Esophagus muscularis mucosa (tissue), 4 donors: ENCODE measurements at regions of chr10 and their contacts with region 1.

Region 1: DNA sequence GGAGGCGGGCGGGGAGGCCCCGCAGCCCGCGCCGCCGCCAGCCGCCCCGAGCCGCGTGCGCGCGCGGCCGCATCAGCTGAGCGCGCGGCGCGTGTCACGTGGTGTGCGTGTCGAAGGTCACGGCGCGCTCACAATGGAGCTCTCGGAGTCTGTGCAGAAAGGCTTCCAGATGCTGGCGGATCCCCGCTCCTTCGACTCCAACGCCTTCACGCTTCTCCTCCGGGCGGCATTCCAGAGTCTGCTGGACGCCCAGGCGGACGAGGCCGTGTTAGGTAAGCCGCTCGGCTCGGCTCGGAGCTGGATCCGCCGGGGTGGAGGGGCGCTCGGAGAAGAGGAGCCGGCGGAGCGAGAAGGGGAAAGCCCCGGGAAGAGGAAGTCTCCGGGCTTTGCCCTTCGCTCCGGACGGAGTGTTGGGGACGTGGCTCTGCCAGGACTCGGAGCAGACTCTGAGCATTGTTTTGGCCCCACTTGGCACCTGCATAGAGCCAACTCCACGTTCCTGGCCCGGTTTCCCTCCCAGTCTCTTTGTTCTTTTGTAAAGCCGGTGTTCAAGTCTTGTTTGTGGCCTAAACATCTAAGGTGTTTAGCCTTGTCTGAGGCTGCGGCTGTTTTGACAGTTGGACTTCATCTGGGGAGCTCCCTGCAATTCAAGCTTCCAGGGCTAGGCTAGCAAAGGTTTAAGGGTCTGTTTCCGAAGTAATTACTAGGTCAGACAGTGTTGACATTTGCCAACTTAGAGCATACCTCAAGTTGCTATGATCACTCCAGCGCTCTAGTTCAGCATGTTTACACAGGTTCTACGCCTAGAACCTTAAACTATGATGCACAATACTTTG is at the start of gene COMMD3:
- DNase-seq: peak; percentile 97
- H3K4me3 ChIP-seq: peak within 1 kb of the TSS; percentile 70 to 85 (median 82)
- H3K27ac ChIP-seq: peak within 1 kb of the TSS; percentile 85 to 95 (median 94)
- H3K4me1 ChIP-seq: peaks cover 28 to 45% (median 38%) of the 10 kb centered on the region in 4 donors
- H3K27me3 ChIP-seq: no peaks in the 10 kb centered on the region
- CTCF ChIP-seq: peak in 1 of 3 experiments; percentile 3
- EP300 ChIP-seq: no peak
- POLR2A ChIP-seq: peak; percentile 7
- total RNA-seq, gene COMMD3: 25.5 to 41.1 (median 31.5) TPM

Region 2: DNA sequence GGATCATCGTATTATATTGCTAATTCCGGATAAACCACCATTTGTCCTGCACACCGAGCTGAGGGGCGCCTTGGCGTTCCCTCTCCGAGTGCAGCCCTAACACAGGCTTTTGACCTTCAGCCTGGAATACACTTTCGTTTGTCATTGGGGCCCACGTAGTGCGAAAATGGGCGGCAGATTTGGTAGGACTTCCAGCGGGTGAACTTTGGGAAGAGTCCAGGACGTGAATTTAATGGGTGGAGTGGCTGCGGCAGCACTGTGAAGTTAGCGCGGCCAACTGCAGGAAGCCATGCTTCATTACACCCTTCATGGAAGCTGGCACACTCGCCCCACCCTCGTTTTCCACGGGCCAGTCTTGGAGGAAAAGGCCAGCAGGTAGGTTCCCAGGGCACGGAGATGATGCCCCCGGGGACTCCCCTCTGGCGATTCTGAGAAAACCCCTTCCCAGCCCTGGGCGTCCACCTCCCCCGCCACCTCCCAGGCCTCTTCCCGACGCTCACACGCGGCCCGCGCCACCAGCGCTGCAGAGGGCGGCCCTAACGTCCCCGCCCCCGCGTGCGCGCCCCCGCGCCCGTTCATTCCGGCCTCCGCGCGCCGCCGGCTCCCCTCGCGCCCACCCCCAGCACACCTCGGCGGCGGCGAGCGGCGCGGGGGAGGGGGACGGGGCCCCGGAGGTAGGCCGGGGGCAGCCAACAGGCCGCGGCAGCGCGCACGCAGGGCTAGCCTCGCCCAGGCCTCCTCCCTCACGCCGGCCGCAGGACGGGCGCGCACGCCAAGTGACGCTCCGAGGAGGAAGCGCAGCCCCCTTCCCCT is 782.8 kb before region 1 on chr10 and contains the start of gene MLLT10:
- intact Hi-C with region 1: loop called (anchors 5 kb)
- DNase-seq: peak; percentile 97
- H3K4me3 ChIP-seq: peak within 1 kb of the TSS; percentile 88 to 92 (median 90)
- H3K27ac ChIP-seq: peak within 1 kb of the TSS; percentile 95 to 98 (median 96)
- H3K4me1 ChIP-seq: peaks cover 14 to 50% (median 43%) of the 10 kb centered on the region in 4 donors
- H3K27me3 ChIP-seq: no peaks in the 10 kb centered on the region
- CTCF ChIP-seq: peak in 1 of 3 experiments; percentile 55
- EP300 ChIP-seq: no peak
- POLR2A ChIP-seq: peak; percentile 62
- total RNA-seq, gene MLLT10: 23.5 to 39.7 (median 30.2) TPM

Region 3: DNA sequence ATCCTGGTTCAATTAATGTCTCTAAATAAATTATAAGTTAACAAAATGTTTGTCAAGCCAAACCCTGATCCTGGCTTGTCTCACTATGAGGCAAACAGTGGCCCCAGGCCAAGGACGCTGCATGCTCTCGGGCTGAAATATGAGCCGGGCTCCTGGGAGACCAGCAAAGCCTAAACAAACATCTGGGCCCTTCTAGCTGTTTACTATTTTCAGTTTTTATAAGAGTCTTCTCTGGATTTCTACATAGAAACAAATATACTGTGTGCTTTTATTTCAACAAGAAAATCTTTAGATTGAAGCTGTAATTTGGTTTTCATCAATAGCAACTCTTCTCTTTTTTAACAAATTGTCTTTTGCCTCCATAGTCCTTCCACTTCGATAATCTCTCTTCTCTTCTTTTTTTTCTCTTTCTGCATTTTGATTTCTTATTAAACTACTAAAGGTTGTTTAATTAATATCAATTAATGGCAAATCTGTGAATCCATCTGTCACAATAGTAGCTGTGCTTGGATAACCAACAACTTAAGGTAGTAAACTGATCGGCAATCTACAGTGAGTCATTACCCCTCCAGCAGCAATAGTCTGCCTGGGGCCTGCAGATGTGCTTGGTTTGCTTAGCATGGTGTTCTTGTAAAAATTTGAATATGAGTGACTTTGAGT is 229.6 kb before region 1 on chr10:
- intact Hi-C with region 1: no loop called
- DNase-seq: no peak
- H3K4me3 ChIP-seq: no peak overlapping the region
- H3K27ac ChIP-seq: peak overlapping the region in 2 of 4 donors; percentile 27 to 41
- H3K4me1 ChIP-seq: peaks cover 9 to 19% (median 15%) of the 10 kb centered on the region in 4 donors
- H3K27me3 ChIP-seq: no peaks in the 10 kb centered on the region
- CTCF ChIP-seq: no peak
- EP300 ChIP-seq: no peak
- POLR2A ChIP-seq: no peak

Region 4: DNA sequence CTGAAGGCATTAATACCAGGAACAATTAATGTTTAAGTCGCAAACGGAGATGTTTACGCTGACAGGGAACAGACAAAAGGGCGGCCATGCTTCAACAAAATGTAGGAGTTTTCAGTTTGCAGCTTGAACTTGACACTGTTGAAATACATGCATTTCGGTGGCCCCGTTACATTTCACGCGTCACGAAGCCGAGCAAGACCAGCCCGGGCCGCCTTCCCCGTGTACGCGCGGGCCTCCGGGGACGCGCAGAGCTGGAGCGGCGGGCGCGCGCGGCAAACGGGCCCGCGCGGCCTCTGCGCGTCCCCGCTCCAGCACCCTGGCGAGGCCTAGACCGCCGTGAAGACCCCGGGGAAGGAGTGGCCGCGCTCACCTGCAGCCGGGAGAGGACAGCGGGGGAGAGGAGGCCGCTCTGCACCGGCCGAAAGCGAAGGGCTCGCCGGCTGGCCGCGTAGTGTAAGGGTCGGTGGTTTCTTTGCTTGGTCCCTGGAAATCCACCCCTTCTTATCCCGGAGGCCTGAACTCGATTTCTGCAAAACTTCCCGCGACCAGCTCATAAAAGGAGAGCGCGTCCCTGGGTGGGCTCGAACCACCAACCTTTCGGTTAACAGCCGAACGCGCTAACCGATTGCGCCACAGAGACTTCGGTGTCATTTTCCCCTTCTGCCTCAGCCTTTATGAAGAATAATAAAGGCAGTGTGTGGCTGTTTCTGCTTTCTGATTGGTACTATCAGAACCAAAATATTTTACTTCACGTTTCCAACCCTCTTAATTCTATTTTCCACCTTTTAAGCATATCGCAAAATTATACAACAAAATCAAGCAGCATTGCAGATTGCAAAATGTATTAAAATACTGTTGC is 87.3 kb before region 1 on chr10:
- intact Hi-C with region 1: loop called (anchors 5 kb)
- DNase-seq: peak; percentile 97
- H3K4me3 ChIP-seq: peak overlapping the region; percentile 67 to 76 (median 70)
- H3K27ac ChIP-seq: peak overlapping the region; percentile 90 to 96 (median 92)
- H3K4me1 ChIP-seq: peaks cover 3 to 10% (median 8%) of the 10 kb centered on the region in 4 donors
- H3K27me3 ChIP-seq: no peaks in the 10 kb centered on the region
- CTCF ChIP-seq: no peak
- EP300 ChIP-seq: no peak
- POLR2A ChIP-seq: no peak

Region 5: GRCh38 chr10:22251751-22252223 is 64.7 kb before region 1 on chr10:
- intact Hi-C with region 1: loop called (anchors 5 kb)
- DNase-seq: peak; percentile 94
- H3K4me3 ChIP-seq: peak overlapping the region; percentile 80 to 87 (median 84)
- H3K27ac ChIP-seq: peak overlapping the region; percentile 90 to 97 (median 96)
- H3K4me1 ChIP-seq: peaks cover 0 to 19% (median 10%) of the 10 kb centered on the region in 4 donors
- H3K27me3 ChIP-seq: no peaks in the 10 kb centered on the region
- CTCF ChIP-seq: no peak
- EP300 ChIP-seq: no peak
- POLR2A ChIP-seq: no peak